Activated B cell treated with CpG ODN at 0.5 μM for 24 hours (primary cell): ENCODE measurements at regions of chr20 and their contacts with region 1.

Region 1: GRCh38 chr20:46132705-46133120 is 14.6 kb downstream of the CD40 start:
- DNase-seq: peak; percentile 66
- ATAC-seq: peak; percentile 76
- H3K4me3 Mint-ChIP-seq: no peak overlapping the region
- H3K27ac Mint-ChIP-seq: peak overlapping the region; percentile 10
- H3K4me1 Mint-ChIP-seq: peaks cover 71% of the 10 kb centered on the region
- H3K27me3 Mint-ChIP-seq: peaks cover 9% of the 10 kb centered on the region
- CTCF ChIP-seq: peak; percentile 20

Region 2: GRCh38 chr20:45910670-45911485 is 221.8 kb before region 1 on chr20:
- CTCF ChIA-PET with region 1: no interaction called
- POLR2A ChIA-PET with region 1: no interaction called
- intact Hi-C with region 1: no loop called
- DNase-seq: peak; percentile 97
- ATAC-seq: peak; percentile 92
- H3K4me3 Mint-ChIP-seq: peak overlapping the region; percentile 90
- H3K27ac Mint-ChIP-seq: peak overlapping the region; percentile 83
- H3K4me1 Mint-ChIP-seq: peaks cover 31% of the 10 kb centered on the region
- H3K27me3 Mint-ChIP-seq: peaks cover 6% of the 10 kb centered on the region
- CTCF ChIP-seq: no peak

Region 3: GRCh38 chr20:46013826-46014516 is 118.7 kb before region 1 on chr20:
- CTCF ChIA-PET with region 1: interaction called, 7 read pairs
- POLR2A ChIA-PET with region 1: no interaction called
- intact Hi-C with region 1: loop called (anchors 2 kb)
- DNase-seq: peak; percentile 73
- ATAC-seq: peak; percentile 90
- H3K4me3 Mint-ChIP-seq: peak overlapping the region; percentile 16
- H3K27ac Mint-ChIP-seq: peak overlapping the region; percentile 53
- H3K4me1 Mint-ChIP-seq: peaks cover 47% of the 10 kb centered on the region
- H3K27me3 Mint-ChIP-seq: peaks cover 47% of the 10 kb centered on the region
- CTCF ChIP-seq: peak; percentile 44

Region 4: GRCh38 chr20:46078954-46079353 is 53.8 kb before region 1 on chr20:
- CTCF ChIA-PET with region 1: no interaction called
- POLR2A ChIA-PET with region 1: no interaction called
- intact Hi-C with region 1: no loop called
- DNase-seq: no peak
- ATAC-seq: no peak
- H3K4me3 Mint-ChIP-seq: no peak overlapping the region
- H3K27ac Mint-ChIP-seq: no peak overlapping the region
- H3K4me1 Mint-ChIP-seq: peaks cover 28% of the 10 kb centered on the region
- H3K27me3 Mint-ChIP-seq: no peaks in the 10 kb centered on the region
- CTCF ChIP-seq: no peak

Region 5: DNA sequence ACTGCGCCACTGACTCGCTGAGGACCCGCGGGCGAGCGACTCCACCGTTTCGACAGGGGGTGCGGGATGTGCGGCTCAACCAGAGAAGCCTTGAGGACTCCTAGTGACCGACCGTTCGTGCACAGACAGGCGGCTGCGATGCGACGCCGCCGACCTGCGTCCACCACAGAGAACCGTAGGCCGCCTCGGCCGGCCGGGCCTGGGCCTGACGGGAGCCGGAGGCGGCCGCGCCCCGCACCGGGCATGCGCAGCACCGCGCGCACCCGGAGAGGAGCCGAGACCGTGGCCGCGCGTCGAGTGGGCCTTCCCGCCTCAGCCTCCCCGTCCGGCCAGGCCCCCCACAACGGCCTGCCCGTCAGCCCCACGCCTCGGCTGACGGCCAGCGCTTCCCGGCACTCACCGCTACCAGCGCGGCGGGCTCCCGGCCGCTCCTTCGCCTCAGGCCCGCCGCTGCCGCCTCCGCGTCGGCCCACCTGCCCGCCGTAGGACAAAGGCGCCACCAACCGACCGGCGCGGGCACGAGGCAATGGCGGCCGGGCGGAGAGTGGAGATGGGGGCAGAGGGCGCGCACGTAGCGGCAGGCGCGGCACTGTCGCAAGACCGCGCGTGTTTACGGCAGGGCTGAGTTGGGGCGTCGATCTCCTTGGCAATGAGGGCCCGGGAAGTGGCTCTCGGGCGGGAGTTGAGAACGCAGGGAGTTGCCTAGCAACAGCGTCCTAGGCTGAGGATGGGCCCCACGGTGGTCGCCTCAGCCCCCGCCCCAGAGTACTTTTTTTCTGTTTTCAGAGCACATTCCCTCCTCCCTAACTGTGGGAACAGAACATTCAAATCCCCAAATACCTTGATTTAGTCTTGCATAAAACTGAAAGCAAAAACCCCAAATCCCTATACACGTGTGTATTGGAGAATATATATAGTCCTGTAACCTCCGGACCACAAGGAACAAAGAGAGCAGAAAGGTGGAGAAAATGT is 43.0 kb before region 1 on chr20 and contains the start of gene NCOA5:
- CTCF ChIA-PET with region 1: no interaction called
- POLR2A ChIA-PET with region 1: interaction called, 4 read pairs
- intact Hi-C with region 1: loop called (anchors 2 kb)
- DNase-seq: peak; percentile 93
- ATAC-seq: peak; percentile 91
- H3K4me3 Mint-ChIP-seq: peak within 1 kb of the TSS; percentile 90
- H3K27ac Mint-ChIP-seq: peak within 1 kb of the TSS; percentile 89
- H3K4me1 Mint-ChIP-seq: peaks cover 53% of the 10 kb centered on the region
- H3K27me3 Mint-ChIP-seq: no peaks in the 10 kb centered on the region
- CTCF ChIP-seq: no peak
- total RNA-seq, gene NCOA5: 46.4 and 53.1 TPM in 2 replicates

Region 6: DNA sequence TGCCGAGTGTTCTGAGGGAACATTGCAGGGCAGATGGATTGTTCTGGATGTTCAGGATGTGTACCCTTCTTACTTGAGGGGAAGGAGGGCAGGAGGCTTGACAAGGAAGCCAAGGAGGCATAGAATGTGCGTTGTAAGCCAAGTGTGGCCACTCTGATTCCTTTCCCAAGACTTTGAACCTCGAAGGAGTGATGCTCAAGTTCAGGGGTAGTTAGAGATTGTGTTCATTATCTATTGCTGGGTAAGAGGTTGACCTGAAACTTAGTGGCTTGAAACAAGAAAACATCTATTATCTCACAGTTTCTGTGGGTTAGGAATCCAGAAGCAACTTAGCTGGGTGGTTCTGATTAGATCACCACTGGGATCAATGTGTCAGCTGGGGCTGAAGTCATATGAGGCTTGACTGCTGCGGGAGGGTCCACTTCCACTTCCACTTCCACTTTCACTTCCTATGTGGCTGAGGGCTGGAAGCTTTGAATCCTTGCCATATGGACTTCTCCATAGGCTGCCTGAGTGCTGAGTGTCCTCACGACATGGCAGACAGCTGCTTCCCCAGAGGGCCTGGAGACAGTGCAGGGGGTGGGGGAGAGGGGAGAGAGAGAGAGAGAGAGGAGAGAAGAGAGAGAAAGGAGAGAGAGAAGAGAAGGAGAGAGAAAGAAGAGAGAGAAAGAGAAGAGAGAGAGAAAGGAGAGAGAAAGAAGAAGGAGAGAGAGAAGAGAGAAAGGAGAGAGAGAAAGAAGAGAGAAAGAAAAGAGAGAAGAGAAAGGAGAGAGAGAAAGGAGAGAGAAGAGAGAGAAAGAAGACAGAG is 21.5 kb before region 1 on chr20:
- CTCF ChIA-PET with region 1: interaction called, 5 read pairs
- POLR2A ChIA-PET with region 1: interaction called, 13 read pairs
- intact Hi-C with region 1: no loop called
- DNase-seq: no peak
- ATAC-seq: peak; percentile 53
- H3K4me3 Mint-ChIP-seq: peak overlapping the region; percentile 54
- H3K27ac Mint-ChIP-seq: peak overlapping the region; percentile 79
- H3K4me1 Mint-ChIP-seq: peaks cover 75% of the 10 kb centered on the region
- H3K27me3 Mint-ChIP-seq: no peaks in the 10 kb centered on the region
- CTCF ChIP-seq: no peak

Region 7: DNA sequence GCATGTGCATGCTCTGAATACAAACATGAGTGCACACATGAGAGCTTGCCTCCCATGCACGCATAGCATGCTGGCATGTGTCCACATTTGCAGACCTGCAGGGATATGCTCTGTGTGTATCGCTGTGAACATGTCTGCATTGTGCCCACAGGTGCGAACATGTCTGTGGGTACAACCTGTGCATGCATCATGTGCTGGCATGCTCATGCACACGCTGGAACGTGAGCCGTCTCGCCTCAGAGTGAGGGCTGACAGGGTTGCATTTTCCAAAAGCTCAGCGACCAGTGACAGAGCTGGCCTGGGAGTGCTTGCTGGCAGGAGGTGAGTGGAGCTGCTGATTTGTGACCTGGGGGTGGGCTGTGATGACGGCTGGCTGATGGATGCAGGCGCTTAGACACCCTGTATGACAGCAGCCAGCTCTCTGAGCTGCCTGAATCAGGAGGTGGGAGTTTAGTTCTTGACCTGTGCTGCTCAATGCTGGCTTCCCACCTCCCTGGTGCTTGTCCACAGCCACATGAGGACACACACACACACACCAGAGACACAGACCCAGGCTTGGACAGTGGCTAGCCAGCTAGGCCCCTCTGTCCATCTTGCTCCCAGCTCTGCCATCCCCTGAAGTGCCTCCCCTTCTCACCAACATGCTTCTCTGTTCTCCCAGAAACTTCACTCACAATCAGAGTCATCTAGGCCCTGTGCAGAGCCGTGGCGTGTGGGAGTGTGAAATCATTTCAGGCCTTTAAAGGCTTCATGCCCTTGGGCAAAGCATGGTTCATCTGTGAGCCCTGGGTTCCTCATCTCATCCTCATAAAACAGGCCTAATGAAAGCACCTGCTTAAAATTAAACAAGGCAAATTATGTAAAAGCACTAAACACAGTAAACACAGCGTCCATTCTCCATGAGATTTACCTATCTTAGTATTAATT is 36.8 kb after region 1 on chr20:
- CTCF ChIA-PET with region 1: interaction called, 14 read pairs
- POLR2A ChIA-PET with region 1: no interaction called
- intact Hi-C with region 1: loop called (anchors 1 kb)
- DNase-seq: no peak
- ATAC-seq: no peak
- H3K4me3 Mint-ChIP-seq: no peak overlapping the region
- H3K27ac Mint-ChIP-seq: no peak overlapping the region
- H3K4me1 Mint-ChIP-seq: no peaks in the 10 kb centered on the region
- H3K27me3 Mint-ChIP-seq: peaks cover 43% of the 10 kb centered on the region
- CTCF ChIP-seq: no peak

Region 8: DNA sequence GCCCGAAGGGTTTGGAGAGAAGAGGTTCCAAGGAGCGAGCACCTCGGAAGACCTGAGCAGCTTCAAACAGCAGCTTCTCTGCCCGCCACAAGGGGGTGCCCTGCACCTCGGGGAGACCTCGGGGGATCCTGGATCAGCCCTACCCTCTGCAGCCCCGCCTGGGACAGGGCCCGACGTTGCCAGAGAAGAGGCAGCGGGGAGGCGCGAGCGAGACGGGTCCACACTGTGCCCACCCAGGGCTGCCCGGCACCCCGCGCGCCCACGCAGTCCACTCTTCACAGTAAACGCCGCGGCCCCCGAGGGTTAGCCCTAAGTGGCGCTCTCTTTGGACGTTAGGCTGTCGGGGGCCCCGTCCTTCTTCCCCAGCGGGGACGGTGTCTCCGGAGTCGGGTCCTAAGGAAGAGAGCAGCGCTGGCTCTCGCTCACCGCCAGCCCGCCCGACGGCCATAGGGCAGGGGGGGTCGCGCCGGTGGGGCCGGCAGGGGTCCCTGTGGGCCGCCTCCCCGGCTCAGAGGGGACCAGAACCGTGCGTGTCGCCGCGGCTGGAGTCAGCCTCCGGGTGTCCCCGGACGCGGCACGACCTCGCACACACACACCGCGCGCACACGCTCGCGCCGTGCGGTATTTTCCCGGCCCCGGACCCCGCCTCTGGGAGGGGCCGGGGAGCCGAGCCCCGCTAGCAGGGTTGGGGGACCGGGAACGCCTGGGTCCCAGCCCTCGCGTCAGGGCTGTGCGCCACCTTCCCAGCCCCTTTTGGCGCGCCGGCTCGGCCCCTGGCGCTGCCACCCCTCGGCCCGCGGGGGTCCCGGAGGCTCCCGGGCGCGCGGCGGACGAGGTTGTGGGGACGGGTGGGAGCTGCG is 174.7 kb after region 1 on chr20:
- CTCF ChIA-PET with region 1: no interaction called
- POLR2A ChIA-PET with region 1: no interaction called
- intact Hi-C with region 1: loop called (anchors 1 kb)
- DNase-seq: peak; percentile 61
- ATAC-seq: peak; percentile 87
- H3K4me3 Mint-ChIP-seq: peak overlapping the region; percentile 16
- H3K27ac Mint-ChIP-seq: no peak overlapping the region
- H3K4me1 Mint-ChIP-seq: peaks cover 11% of the 10 kb centered on the region
- H3K27me3 Mint-ChIP-seq: peaks cover 67% of the 10 kb centered on the region
- CTCF ChIP-seq: no peak

Region 9: GRCh38 chr20:46411637-46412036 is 278.9 kb after region 1 on chr20:
- CTCF ChIA-PET with region 1: interaction called, 3 read pairs
- POLR2A ChIA-PET with region 1: interaction called, 4 read pairs
- intact Hi-C with region 1: loop called (anchors 1 kb)
- DNase-seq: no peak
- ATAC-seq: no peak
- H3K4me3 Mint-ChIP-seq: no peak overlapping the region
- H3K27ac Mint-ChIP-seq: no peak overlapping the region
- H3K4me1 Mint-ChIP-seq: peaks cover 13% of the 10 kb centered on the region
- H3K27me3 Mint-ChIP-seq: peaks cover 16% of the 10 kb centered on the region
- CTCF ChIP-seq: no peak